Calu3 (cell line): ENCODE measurements at regions of chr18 and their contacts with region 1.

Region 1: GRCh38 chr18:73136134-73136533 is 268.3 kb upstream of the NETO1 start:
- DNase-seq: no peak
- H3K4me3 Mint-ChIP-seq: no peak overlapping the region
- H3K27ac Mint-ChIP-seq: no peak overlapping the region
- H3K4me1 Mint-ChIP-seq: peaks cover 8% of the 10 kb centered on the region
- H3K27me3 Mint-ChIP-seq: no peaks in the 10 kb centered on the region
- CTCF ChIP-seq: peak; percentile 58

Region 2: GRCh38 chr18:72700961-72701718 is 435.0 kb before region 1 on chr18:
- CTCF ChIA-PET with region 1: no interaction called
- intact Hi-C with region 1: loop called (anchors 1 kb)
- DNase-seq: no peak
- H3K4me3 Mint-ChIP-seq: no peak overlapping the region
- H3K27ac Mint-ChIP-seq: no peak overlapping the region
- H3K4me1 Mint-ChIP-seq: no peaks in the 10 kb centered on the region
- H3K27me3 Mint-ChIP-seq: no peaks in the 10 kb centered on the region
- CTCF ChIP-seq: peak; percentile 54

Region 3: GRCh38 chr18:72762515-72763122 is 373.5 kb before region 1 on chr18:
- CTCF ChIA-PET with region 1: interaction called, 8 read pairs
- intact Hi-C with region 1: loop called (anchors 1 kb)
- DNase-seq: peak; percentile 32
- H3K4me3 Mint-ChIP-seq: no peak overlapping the region
- H3K27ac Mint-ChIP-seq: no peak overlapping the region
- H3K4me1 Mint-ChIP-seq: no peaks in the 10 kb centered on the region
- H3K27me3 Mint-ChIP-seq: no peaks in the 10 kb centered on the region
- CTCF ChIP-seq: peak; percentile 69

Region 4: GRCh38 chr18:72849671-72850070 is 286.5 kb before region 1 on chr18:
- CTCF ChIA-PET with region 1: no interaction called
- intact Hi-C with region 1: loop called (anchors 10 kb)
- DNase-seq: no peak
- H3K4me3 Mint-ChIP-seq: no peak overlapping the region
- H3K27ac Mint-ChIP-seq: no peak overlapping the region
- H3K4me1 Mint-ChIP-seq: peaks cover 27% of the 10 kb centered on the region
- H3K27me3 Mint-ChIP-seq: no peaks in the 10 kb centered on the region
- CTCF ChIP-seq: no peak

Region 5: DNA sequence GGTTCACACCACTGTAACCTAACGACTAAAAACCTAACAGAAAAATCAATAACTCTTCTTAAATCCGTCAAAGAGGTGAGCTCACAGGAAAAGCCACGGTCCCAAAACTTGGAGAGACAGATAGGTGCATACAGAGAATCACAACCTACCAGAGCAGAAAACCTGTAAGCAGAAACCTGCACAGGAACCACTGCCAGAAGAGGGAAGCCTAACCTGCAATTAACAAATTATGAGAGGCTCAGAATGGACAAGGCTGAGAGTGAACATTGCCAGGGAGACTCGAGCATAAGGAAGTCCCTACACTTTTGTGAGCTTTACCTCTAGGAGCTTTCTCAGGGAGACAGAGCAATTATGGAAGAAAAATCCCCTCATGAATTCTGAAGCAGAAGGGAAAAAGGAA is 112.2 kb before region 1 on chr18:
- CTCF ChIA-PET with region 1: no interaction called
- intact Hi-C with region 1: loop called (anchors 5 kb)
- DNase-seq: no peak
- H3K4me3 Mint-ChIP-seq: no peak overlapping the region
- H3K27ac Mint-ChIP-seq: no peak overlapping the region
- H3K4me1 Mint-ChIP-seq: peaks cover 10% of the 10 kb centered on the region
- H3K27me3 Mint-ChIP-seq: no peaks in the 10 kb centered on the region
- CTCF ChIP-seq: no peak

Region 6: DNA sequence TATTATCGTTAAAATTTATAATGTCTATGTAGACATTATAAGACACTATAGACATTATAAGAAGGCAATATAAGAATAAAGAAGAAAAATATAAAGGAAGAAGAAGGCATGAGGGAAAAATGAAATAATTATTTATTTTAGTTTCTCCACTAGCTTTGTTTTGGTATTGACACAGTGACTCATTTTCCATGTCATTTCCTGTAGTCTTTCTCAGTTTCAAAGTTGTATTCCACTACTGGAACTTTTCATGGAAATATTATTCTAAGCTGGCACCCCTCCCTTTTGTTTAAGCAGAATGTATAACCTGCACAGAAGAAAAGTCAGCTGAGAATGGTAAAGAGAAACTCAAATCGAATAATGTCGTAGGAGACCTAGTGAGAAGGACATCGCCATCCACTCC is 34.2 kb before region 1 on chr18:
- CTCF ChIA-PET with region 1: no interaction called
- intact Hi-C with region 1: no loop called
- DNase-seq: no peak
- H3K4me3 Mint-ChIP-seq: no peak overlapping the region
- H3K27ac Mint-ChIP-seq: no peak overlapping the region
- H3K4me1 Mint-ChIP-seq: peaks cover 10% of the 10 kb centered on the region
- H3K27me3 Mint-ChIP-seq: no peaks in the 10 kb centered on the region
- CTCF ChIP-seq: no peak

Region 7: DNA sequence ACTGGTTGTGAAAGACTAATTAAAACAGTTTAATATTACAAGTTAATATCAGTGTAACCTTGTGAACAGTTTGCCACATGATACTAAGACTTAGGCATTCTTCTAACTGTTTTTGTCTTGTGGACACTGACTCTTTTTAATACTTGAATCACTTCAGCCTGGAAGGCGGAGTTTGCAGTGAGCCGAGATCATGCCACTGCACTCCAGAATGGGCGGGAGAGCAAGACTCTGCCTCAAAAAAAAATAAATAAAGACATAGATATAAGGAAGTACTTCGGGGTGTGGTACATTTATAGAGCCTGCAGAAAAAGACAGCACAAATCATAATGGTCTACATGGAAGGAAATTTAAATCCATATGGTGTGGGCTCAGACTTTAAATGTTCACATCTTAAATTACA is 32.1 kb after region 1 on chr18:
- CTCF ChIA-PET with region 1: no interaction called
- intact Hi-C with region 1: no loop called
- DNase-seq: no peak
- H3K4me3 Mint-ChIP-seq: no peak overlapping the region
- H3K27ac Mint-ChIP-seq: no peak overlapping the region
- H3K4me1 Mint-ChIP-seq: peaks cover 8% of the 10 kb centered on the region
- H3K27me3 Mint-ChIP-seq: no peaks in the 10 kb centered on the region
- CTCF ChIP-seq: no peak